ENCODE measurements at regions of chr9 and their contacts with region 1.

Region 1: GRCh38 chr9:126985870-126986498 is 71.4 kb downstream of the RALGPS1 start:
- DNase-seq: peak; percentile 93 to 97 (median 95)
- H3K4me3 ChIP-seq: peak overlapping the region; percentile 1 to 25
- H3K4me3 Mint-ChIP-seq: peak overlapping the region; percentile 33 to 86 (median 68)
- H3K27ac ChIP-seq: peak overlapping the region; percentile 33
- H3K27ac Mint-ChIP-seq: peak overlapping the region; percentile 57 to 95 (median 86)
- H3K4me1 ChIP-seq: peaks cover 65% of the 10 kb centered on the region
- H3K4me1 Mint-ChIP-seq: peaks cover 57 to 82% (median 68%) of the 10 kb centered on the region in 4 donors
- H3K27me3 ChIP-seq: no peaks in the 10 kb centered on the region
- H3K27me3 Mint-ChIP-seq: peaks cover 5 to 18% of the 10 kb centered on the region in 2 donors

Region 2: DNA sequence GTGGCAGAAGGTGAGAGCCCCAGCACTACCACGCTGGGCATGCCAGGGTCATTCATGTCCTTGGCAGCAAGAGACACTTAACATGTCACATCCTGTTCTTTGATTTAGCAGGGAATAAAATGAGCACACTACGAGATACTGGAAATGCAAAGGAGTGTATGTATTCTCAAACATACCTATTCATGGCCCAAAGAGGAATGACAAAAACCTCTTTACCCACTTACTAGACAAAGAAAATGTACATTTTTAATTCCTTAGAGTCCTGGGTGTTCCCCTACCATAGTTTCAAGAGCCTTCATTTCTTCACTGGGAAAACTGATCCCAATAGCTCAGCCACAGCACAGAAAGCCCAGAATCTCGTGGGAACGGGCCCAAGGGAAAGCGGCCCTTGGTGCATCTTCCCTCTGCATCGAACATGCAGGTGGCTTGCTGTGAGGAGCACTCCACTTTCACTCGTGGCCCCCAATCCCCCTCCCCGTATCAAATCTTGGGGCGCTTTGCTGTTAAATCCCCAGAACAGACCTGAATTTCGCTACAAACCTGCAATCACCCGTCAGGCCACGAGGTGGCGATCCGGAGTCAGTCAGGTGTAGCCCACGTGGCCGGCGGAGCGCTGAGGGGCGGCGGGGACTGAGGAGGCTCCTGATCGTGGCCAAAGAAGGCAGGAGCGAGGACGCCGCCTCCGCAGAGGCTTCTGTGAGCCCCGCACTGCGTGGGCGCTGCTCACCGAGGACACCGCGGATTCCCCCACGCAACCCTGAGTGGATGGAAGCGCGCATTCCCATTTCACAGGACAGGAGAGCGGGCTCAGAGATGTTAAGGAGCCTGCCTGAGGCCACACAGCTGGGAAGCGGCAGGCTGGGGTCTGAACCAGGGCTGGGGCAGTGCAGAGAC is 280.9 kb before region 1 on chr9:
- CTCF ChIA-PET with region 1: no interaction called
- POLR2A ChIA-PET with region 1: no interaction called
- intact Hi-C with region 1: no loop called
- DNase-seq: peak; percentile 77 to 82 (median 81)
- H3K4me3 ChIP-seq: no peak overlapping the region
- H3K4me3 Mint-ChIP-seq: peak overlapping the region; percentile 17 to 79 (median 53)
- H3K27ac ChIP-seq: no peak overlapping the region
- H3K27ac Mint-ChIP-seq: peak overlapping the region in 4 of 7 donors; percentile 9 to 53 (median 30)
- H3K4me1 ChIP-seq: peaks cover 17% of the 10 kb centered on the region
- H3K4me1 Mint-ChIP-seq: peaks cover 7 to 21% (median 14%) of the 10 kb centered on the region in 4 donors
- H3K27me3 ChIP-seq: peaks cover 10% of the 10 kb centered on the region
- H3K27me3 Mint-ChIP-seq: peaks cover 14 to 18% of the 10 kb centered on the region in 2 donors

Region 3: GRCh38 chr9:126914458-126915280 is 71.3 kb before region 1 on chr9 and contains the start of gene RALGPS1:
- CTCF ChIA-PET with region 1: no interaction called
- POLR2A ChIA-PET with region 1: interaction called, 3 read pairs
- intact Hi-C with region 1: loop called (anchors 2 kb)
- DNase-seq: peak; percentile 82 to 90 (median 88)
- H3K4me3 ChIP-seq: peak within 1 kb of the TSS in 1 of 2 donors; percentile 19
- H3K4me3 Mint-ChIP-seq: peak within 1 kb of the TSS; percentile 78 to 89 (median 84)
- H3K27ac ChIP-seq: peak within 1 kb of the TSS; percentile 32
- H3K27ac Mint-ChIP-seq: peak within 1 kb of the TSS in 6 of 7 donors; percentile 27 to 91 (median 72)
- H3K4me1 ChIP-seq: peaks cover 5% of the 10 kb centered on the region
- H3K4me1 Mint-ChIP-seq: peaks cover 5 to 14% (median 9%) of the 10 kb centered on the region in 4 donors
- H3K27me3 ChIP-seq: no peaks in the 10 kb centered on the region
- H3K27me3 Mint-ChIP-seq: peaks cover 2 to 3% of the 10 kb centered on the region in 2 donors
- total RNA-seq, gene RALGPS1: 9.8 to 10.3 TPM

Region 4: DNA sequence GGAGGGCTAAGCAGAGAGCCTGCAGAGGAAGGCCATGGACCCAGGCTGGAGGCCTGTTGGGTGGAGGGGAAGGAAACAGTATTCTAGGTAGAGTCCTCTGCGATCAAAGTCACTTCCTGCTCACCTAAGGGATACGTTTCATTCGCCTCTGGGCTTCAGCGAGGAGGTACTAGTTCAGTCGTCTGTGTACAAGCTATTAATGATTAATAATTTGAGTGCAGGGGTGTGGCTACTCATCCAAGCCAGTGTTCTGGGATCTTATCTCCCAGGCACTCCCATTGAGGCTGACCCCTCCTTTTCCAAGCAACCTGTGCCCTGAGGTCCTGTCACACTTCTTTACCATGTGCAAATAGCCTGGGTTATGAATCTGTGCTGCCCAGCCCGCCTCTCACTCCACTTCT is 46.2 kb before region 1 on chr9:
- CTCF ChIA-PET with region 1: interaction called, 26 read pairs
- POLR2A ChIA-PET with region 1: no interaction called
- intact Hi-C with region 1: loop called (anchors 2 kb)
- DNase-seq: no peak
- H3K4me3 ChIP-seq: no peak overlapping the region
- H3K4me3 Mint-ChIP-seq: no peak overlapping the region
- H3K27ac ChIP-seq: no peak overlapping the region
- H3K27ac Mint-ChIP-seq: no peak overlapping the region
- H3K4me1 ChIP-seq: peaks cover 4% of the 10 kb centered on the region
- H3K4me1 Mint-ChIP-seq: peaks cover 4 to 11% (median 5%) of the 10 kb centered on the region in 4 donors
- H3K27me3 ChIP-seq: no peaks in the 10 kb centered on the region
- H3K27me3 Mint-ChIP-seq: no peaks in the 10 kb centered on the region

Region 5: GRCh38 chr9:127004946-127005769 is 19.2 kb after region 1 on chr9:
- CTCF ChIA-PET with region 1: interaction called, 4 read pairs
- POLR2A ChIA-PET with region 1: interaction called, 17 read pairs
- intact Hi-C with region 1: loop called (anchors 1 kb)
- DNase-seq: peak; percentile 78 to 90 (median 80)
- H3K4me3 ChIP-seq: no peak overlapping the region
- H3K4me3 Mint-ChIP-seq: peak overlapping the region in 6 of 8 donors; percentile 5 to 59 (median 50)
- H3K27ac ChIP-seq: peak overlapping the region; percentile 59
- H3K27ac Mint-ChIP-seq: peak overlapping the region; percentile 65 to 95 (median 85)
- H3K4me1 ChIP-seq: peaks cover 26% of the 10 kb centered on the region
- H3K4me1 Mint-ChIP-seq: peaks cover 20 to 33% (median 24%) of the 10 kb centered on the region in 4 donors
- H3K27me3 ChIP-seq: no peaks in the 10 kb centered on the region
- H3K27me3 Mint-ChIP-seq: peaks cover 0 to 6% of the 10 kb centered on the region in 2 donors

Region 6: DNA sequence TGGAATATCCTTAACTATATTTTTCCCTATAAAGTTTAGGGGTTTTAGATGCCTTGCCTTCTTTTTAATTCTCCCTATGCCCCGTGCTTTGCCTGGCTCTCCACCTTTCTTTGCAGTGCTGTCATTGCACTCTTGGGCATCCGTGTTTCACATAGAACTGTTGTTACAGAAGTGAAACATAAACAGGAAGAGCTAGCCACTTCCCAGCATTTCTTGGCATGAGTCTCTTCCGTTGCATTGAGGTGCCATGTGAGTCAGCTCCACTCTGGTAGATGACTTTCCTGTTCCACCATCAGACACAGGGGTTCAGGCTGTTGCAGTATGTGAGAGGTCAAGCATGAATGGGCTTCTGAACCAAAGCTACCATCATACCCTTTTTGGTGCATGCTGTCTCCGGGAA is 63.1 kb after region 1 on chr9:
- CTCF ChIA-PET with region 1: interaction called, 5 read pairs
- POLR2A ChIA-PET with region 1: interaction called, 16 read pairs
- intact Hi-C with region 1: loop called (anchors 10 kb)
- DNase-seq: peak; percentile 16 to 49 (median 30)
- H3K4me3 ChIP-seq: no peak overlapping the region
- H3K4me3 Mint-ChIP-seq: peak overlapping the region; percentile 43 to 92 (median 70)
- H3K27ac ChIP-seq: no peak overlapping the region
- H3K27ac Mint-ChIP-seq: peak overlapping the region in 5 of 7 donors; percentile 1 to 72 (median 6)
- H3K4me1 ChIP-seq: peaks cover 21% of the 10 kb centered on the region
- H3K4me1 Mint-ChIP-seq: peaks cover 18 to 37% (median 25%) of the 10 kb centered on the region in 4 donors
- H3K27me3 ChIP-seq: no peaks in the 10 kb centered on the region
- H3K27me3 Mint-ChIP-seq: no peaks in the 10 kb centered on the region

Region 7: GRCh38 chr9:127178686-127179632 is 193.0 kb after region 1 on chr9:
- CTCF ChIA-PET with region 1: no interaction called
- POLR2A ChIA-PET with region 1: no interaction called
- intact Hi-C with region 1: no loop called
- DNase-seq: no peak
- H3K4me3 ChIP-seq: no peak overlapping the region
- H3K4me3 Mint-ChIP-seq: no peak overlapping the region
- H3K27ac ChIP-seq: no peak overlapping the region
- H3K27ac Mint-ChIP-seq: peak overlapping the region in 1 of 7 donors; percentile 35
- H3K4me1 ChIP-seq: no peaks in the 10 kb centered on the region
- H3K4me1 Mint-ChIP-seq: no peaks in the 10 kb centered on the region
- H3K27me3 ChIP-seq: no peaks in the 10 kb centered on the region
- H3K27me3 Mint-ChIP-seq: no peaks in the 10 kb centered on the region

Region 8: GRCh38 chr9:127199001-127199791 is 213.2 kb after region 1 on chr9:
- CTCF ChIA-PET with region 1: interaction called, 31 read pairs
- POLR2A ChIA-PET with region 1: interaction called, 5 read pairs
- intact Hi-C with region 1: loop called (anchors 1 kb)
- DNase-seq: peak; percentile 67 to 74 (median 72)
- H3K4me3 ChIP-seq: no peak overlapping the region
- H3K4me3 Mint-ChIP-seq: no peak overlapping the region
- H3K27ac ChIP-seq: no peak overlapping the region
- H3K27ac Mint-ChIP-seq: no peak overlapping the region
- H3K4me1 ChIP-seq: peaks cover 10% of the 10 kb centered on the region
- H3K4me1 Mint-ChIP-seq: peaks cover 1 to 16% (median 6%) of the 10 kb centered on the region in 4 donors
- H3K27me3 ChIP-seq: no peaks in the 10 kb centered on the region
- H3K27me3 Mint-ChIP-seq: peaks cover 0 to 1% of the 10 kb centered on the region in 2 donors

Region 9: DNA sequence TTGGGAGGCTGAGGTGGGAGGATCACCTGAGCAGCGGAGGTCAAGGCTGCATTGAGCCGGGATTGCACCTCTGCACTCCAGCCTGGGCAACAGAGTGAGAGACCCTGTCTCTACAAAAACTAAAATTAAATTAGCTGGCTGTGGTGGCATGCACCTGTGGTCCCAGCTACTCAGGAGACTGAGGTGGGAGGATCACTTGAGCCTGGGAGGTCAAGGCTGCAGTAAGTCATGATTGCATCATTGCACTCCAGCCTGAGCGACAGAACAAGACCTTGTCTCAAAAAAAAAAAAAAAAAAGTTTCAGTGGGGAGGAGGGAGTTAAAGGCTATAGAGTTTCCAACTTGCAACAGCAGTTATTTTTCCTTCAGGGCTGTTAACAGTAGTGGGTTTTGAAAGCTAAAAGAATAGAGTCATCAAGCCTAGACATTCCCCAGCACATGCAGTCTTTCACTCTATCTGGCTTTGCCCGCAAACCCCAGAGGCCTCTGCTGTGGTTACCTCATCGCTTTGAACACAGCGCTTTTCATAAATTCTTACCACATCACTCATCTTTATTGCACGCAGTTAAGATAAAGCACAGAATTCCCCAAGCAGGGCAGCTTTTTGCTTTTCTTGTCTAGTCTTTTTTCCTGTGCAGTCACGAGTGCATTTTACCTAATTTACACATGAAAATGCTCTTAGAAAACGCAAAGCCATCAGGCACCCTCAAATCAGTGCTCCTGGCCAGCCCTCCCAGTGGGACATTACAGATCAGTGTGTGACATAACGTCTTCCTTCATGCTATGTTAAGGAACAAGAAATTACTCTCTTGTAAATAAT is 402.3 kb after region 1 on chr9:
- CTCF ChIA-PET with region 1: no interaction called
- POLR2A ChIA-PET with region 1: interaction called, 7 read pairs
- intact Hi-C with region 1: loop called (anchors 1 kb)
- DNase-seq: peak; percentile 90 to 95 (median 93)
- H3K4me3 ChIP-seq: no peak overlapping the region
- H3K4me3 Mint-ChIP-seq: peak overlapping the region in 6 of 8 donors; percentile 40 to 69 (median 54)
- H3K27ac ChIP-seq: no peak overlapping the region
- H3K27ac Mint-ChIP-seq: peak overlapping the region; percentile 39 to 93 (median 82)
- H3K4me1 ChIP-seq: peaks cover 23% of the 10 kb centered on the region
- H3K4me1 Mint-ChIP-seq: peaks cover 17 to 18% (median 18%) of the 10 kb centered on the region in 4 donors
- H3K27me3 ChIP-seq: peaks cover 66% of the 10 kb centered on the region
- H3K27me3 Mint-ChIP-seq: peaks cover 56 to 65% of the 10 kb centered on the region in 2 donors